Naive thymus-derived CD8-positive, alpha-beta T cell (primary cell): ENCODE measurements at regions of chr5 and their contacts with region 1.

Region 1: DNA sequence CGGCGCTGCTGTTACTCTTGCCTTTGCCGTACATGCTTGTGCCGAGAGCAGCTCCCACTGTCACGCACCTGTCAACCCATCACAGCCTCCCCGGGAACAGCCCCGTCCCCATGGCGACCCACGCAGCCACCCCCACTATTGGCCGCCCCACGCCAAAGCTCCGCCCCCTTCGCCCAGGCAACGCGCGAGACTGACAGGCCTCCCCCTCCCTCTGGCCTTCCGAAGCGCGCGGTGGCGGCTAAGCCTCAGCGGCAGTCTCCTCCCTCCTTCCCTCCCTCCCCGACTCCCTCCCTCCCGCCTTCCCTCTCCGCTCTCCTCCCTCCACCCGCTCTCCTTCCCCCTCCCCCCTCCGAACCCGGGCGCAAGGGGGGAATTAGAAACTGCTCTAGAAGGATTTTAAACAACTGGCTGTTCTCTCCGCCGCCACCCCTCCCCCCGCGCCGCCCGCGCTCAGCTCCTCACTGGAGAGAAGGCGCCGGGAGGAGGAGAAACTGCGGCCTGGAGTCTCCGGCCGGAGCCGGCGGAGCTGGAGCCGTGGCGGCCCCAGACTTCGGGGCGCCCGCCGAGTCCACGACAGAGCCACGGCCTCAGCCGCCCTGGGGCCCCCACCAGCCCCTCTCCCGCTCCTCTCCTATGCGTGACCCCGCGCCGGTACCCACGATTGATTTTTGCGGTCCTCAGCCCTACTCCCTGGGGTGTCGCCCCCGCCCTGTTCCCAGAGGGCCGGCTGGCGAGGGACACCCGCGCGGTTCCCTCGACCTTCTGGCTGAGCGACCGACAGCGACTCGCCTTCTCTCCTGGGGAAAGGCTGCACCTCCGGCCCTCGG is at the start of gene SSBP2:
- DNase-seq: peak; percentile 98 to 100 (median 99)
- ATAC-seq: peak; percentile 83 to 88
- H3K4me3 Mint-ChIP-seq: peak within 1 kb of the TSS; percentile 93 to 99 (median 96)
- H3K27ac Mint-ChIP-seq: peak within 1 kb of the TSS; percentile 68 to 98 (median 96)
- H3K4me1 Mint-ChIP-seq: peaks cover 13 to 41% (median 38%) of the 10 kb centered on the region in 4 donors
- H3K27me3 Mint-ChIP-seq: no peaks in the 10 kb centered on the region
- polyA plus RNA-seq, gene SSBP2: 36.4 to 43.8 (median 36.8) TPM

Region 2: DNA sequence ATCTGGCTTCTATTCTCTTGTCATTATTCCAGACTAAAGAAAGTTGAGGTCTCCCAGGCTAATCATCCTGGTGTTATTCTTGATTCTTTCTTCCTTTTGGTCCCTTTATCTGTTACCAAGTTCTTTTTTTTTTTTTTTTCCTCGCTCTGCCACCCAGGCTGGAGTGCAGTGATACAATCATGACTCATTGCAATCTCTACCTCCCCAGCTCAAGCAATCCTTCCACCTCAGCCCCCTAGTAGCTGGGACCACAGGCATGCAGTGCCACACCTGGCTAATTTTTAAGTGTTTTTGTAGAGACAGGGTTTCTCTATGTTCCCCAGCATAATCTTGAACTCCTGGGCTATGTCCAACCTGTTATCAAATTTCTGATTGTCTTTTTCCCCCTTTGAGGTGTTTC is 969.9 kb before region 1 on chr5:
- POLR2A ChIA-PET with region 1: no interaction called
- DNase-seq: no peak
- ATAC-seq: no peak
- H3K4me3 Mint-ChIP-seq: no peak overlapping the region
- H3K27ac Mint-ChIP-seq: peak overlapping the region in 1 of 10 donors; percentile 68
- H3K4me1 Mint-ChIP-seq: peaks cover 0 to 13% (median 9%) of the 10 kb centered on the region in 4 donors
- H3K27me3 Mint-ChIP-seq: no peaks in the 10 kb centered on the region

Region 3: GRCh38 chr5:81558188-81558587 is 193.0 kb before region 1 on chr5:
- POLR2A ChIA-PET with region 1: no interaction called
- DNase-seq: no peak
- ATAC-seq: no peak
- H3K4me3 Mint-ChIP-seq: no peak overlapping the region
- H3K27ac Mint-ChIP-seq: no peak overlapping the region
- H3K4me1 Mint-ChIP-seq: peaks cover 10 to 29% (median 13%) of the 10 kb centered on the region in 4 donors
- H3K27me3 Mint-ChIP-seq: no peaks in the 10 kb centered on the region

Region 4: DNA sequence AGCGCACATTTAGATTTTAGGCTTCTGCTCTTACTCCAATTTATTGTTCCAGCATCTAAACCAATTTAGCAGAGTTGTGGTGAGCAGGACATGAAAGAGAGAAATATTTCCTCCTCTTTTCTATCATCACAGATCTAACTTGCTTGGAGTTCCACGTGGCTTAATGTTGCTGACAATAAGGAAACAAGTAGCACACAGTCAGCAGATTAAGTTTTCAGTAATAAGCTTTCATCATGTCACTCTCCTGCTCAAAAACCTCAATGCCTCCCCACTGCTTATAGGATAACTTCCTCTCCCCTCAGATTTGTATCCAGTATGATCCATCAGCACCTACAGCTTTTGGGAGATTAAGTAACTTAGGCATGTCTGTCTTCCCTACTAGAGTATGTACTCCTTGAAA is 10.0 kb after region 1 on chr5:
- POLR2A ChIA-PET with region 1: interaction called, 14 read pairs
- DNase-seq: no peak
- ATAC-seq: no peak
- H3K4me3 Mint-ChIP-seq: no peak overlapping the region
- H3K27ac Mint-ChIP-seq: peak overlapping the region in 1 of 10 donors; percentile 26
- H3K4me1 Mint-ChIP-seq: peaks cover 10 to 19% (median 11%) of the 10 kb centered on the region in 4 donors
- H3K27me3 Mint-ChIP-seq: no peaks in the 10 kb centered on the region

Region 5: GRCh38 chr5:81779125-81779915 is 28.1 kb after region 1 on chr5:
- POLR2A ChIA-PET with region 1: interaction called, 21 read pairs
- DNase-seq: peak in 7 of 10 donors; percentile 4 to 53 (median 24)
- ATAC-seq: peak; percentile 72 to 76
- H3K4me3 Mint-ChIP-seq: peak overlapping the region; percentile 76 to 92 (median 88)
- H3K27ac Mint-ChIP-seq: peak overlapping the region; percentile 92 to 98 (median 95)
- H3K4me1 Mint-ChIP-seq: peaks cover 11 to 29% (median 24%) of the 10 kb centered on the region in 4 donors
- H3K27me3 Mint-ChIP-seq: no peaks in the 10 kb centered on the region

Region 6: DNA sequence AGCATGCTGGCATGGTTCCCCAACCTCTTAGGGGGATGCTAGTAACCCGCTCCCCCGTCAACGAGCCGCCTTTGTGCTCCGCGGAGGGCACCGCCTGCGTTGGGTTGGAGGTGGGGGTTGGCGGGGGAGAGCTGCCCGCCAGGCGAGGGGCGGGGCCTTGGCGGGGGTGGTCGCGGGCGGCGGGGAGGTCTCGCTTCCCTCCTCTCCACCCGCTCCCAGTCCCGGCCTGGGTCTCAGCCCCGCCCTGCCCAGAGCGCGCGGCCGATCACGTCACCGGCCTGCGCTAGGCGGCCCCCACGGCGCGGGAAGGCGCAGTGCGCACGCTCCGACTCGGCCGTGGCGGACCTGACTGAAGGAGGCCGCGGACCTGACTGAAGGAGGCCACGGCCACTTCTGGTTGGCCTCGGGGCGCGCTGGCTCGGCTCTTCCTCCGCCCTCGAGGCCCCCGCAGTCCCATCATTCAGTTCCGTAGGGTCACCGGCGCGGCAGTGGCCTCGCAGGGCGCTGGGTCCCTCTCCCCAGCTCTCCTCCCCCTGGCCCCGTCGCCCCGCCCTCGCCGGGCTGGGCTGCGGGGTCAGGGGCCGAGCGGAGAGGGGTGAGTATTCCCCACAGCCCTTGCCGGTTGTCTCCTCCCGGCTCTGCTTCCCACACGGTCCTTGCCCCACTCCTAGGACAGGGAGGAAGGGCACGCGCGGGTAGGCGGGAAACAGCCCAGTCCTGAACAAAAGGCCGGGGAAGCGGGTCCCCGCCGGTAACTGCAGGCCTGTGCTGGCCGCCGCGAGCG is 220.7 kb after region 1 on chr5 and contains the start of gene ATG10:
- POLR2A ChIA-PET with region 1: interaction called, 24 read pairs
- DNase-seq: peak; percentile 82 to 93 (median 87)
- ATAC-seq: peak; percentile 85 to 89
- H3K4me3 Mint-ChIP-seq: peak within 1 kb of the TSS; percentile 93 to 100 (median 98)
- H3K27ac Mint-ChIP-seq: peak within 1 kb of the TSS; percentile 96 to 100 (median 99)
- H3K4me1 Mint-ChIP-seq: peaks cover 6 to 29% (median 25%) of the 10 kb centered on the region in 4 donors
- H3K27me3 Mint-ChIP-seq: peaks cover 0 to 1% (median 0%) of the 10 kb centered on the region in 5 donors
- polyA plus RNA-seq, gene ATG10: 9.2 to 11.8 (median 11.6) TPM